ENCODE measurements at regions of chr11 and their contacts with region 1.

Region 1: DNA sequence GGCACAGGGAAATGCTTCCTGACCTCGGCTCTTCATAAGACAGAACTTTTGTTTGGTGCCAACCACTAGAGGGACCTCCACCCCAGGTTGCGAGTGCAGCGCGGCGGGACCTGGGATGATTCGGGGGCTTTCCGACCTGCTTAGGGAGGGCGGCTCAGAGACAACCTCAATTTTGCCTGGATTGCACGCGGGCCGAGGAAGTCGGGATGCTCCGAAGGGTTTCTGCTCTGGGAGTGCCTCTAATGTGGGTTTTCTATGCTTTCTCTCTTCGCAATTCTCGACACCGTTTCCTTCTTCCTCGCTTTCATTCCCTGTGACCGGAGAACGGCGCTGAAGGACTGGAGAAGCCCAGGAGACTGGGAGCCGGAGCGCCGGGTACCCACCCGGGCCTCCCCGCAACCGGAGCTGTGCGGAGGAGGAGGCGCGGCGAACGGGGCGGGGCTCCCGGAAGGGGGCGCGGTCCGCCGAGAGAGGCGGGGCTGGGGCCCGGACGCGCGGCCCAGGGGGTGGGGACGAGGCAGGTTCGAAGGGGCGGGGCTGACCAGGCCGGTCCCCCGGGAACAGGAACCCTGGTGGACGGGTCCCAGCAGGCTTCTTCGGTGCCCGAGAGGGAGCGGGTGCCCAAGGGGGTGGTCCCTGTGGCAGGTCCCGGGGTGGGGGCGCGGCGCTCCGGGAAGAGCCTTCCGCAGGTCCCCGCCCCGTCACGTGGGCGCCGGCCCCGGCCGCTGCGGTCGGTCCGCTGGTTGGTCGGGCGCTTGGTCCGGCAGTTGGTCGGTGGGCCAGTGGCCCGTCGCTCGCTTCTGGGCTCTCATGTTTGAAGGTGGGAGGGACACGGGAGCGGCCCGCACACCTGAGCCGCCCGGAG is at the start of gene PPFIBP2:
- DNase-seq: peak; percentile 82 to 87 (median 82)
- H3K4me3 ChIP-seq: peak within 1 kb of the TSS; percentile 88 to 93
- H3K4me3 Mint-ChIP-seq: peak within 1 kb of the TSS; percentile 94 to 97 (median 96)
- H3K27ac ChIP-seq: peak within 1 kb of the TSS; percentile 84
- H3K27ac Mint-ChIP-seq: peak within 1 kb of the TSS; percentile 92 to 98 (median 96)
- H3K4me1 ChIP-seq: peaks cover 20% of the 10 kb centered on the region
- H3K4me1 Mint-ChIP-seq: peaks cover 10 to 58% (median 30%) of the 10 kb centered on the region in 4 donors
- H3K27me3 ChIP-seq: no peaks in the 10 kb centered on the region
- H3K27me3 Mint-ChIP-seq: no peaks in the 10 kb centered on the region
- total RNA-seq, gene PPFIBP2: 18.5 to 22.0 TPM

Region 2: GRCh38 chr11:7538031-7538430 is 24.6 kb after region 1 on chr11:
- CTCF ChIA-PET with region 1: interaction called, 22 read pairs
- POLR2A ChIA-PET with region 1: no interaction called
- intact Hi-C with region 1: no loop called
- DNase-seq: peak in 2 of 5 donors; percentile 11 to 24
- H3K4me3 ChIP-seq: no peak overlapping the region
- H3K4me3 Mint-ChIP-seq: peak overlapping the region in 7 of 8 donors; percentile 31 to 74 (median 68)
- H3K27ac ChIP-seq: no peak overlapping the region
- H3K27ac Mint-ChIP-seq: peak overlapping the region in 6 of 7 donors; percentile 25 to 89 (median 78)
- H3K4me1 ChIP-seq: peaks cover 30% of the 10 kb centered on the region
- H3K4me1 Mint-ChIP-seq: peaks cover 19 to 84% (median 57%) of the 10 kb centered on the region in 4 donors
- H3K27me3 ChIP-seq: no peaks in the 10 kb centered on the region
- H3K27me3 Mint-ChIP-seq: peaks cover 0 to 5% of the 10 kb centered on the region in 2 donors

Region 3: DNA sequence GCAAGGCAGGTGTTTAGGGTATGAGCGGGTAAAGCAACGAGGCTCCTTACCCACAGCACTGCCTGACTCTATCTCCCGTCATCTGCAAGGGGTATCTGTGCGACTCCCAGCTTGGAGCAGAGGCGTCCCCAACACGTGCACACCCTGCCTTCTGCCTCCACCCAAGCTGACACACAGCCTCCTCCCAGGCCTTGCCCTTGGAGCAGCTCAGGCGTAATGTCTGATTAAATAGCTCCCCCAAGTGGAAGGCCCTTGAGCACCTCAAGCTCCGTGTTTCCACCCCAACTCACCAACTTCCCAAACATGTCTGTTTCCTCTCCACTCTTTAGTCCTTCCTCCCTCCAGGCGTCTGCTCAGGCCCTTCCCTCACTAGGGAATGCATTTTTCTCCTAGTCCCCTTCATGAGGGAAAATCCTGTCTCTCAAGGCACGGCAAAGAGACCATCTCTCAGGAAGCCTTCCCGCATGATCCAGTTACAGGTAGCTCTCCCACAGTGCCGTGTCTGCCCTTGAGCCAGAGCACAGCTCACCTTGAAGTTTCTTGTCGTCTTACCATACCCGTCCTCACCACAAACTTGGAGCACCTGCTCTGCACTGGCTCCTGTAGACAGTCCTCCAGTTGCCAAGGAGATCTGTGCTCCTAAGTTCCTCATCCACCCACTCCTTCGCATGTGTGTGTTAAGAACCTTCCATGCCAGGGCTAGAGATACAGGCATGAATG is 144.0 kb after region 1 on chr11:
- CTCF ChIA-PET with region 1: interaction called, 18 read pairs
- POLR2A ChIA-PET with region 1: no interaction called
- intact Hi-C with region 1: loop called (anchors 2 kb)
- DNase-seq: peak in 3 of 5 donors; percentile 13 to 24 (median 19)
- H3K4me3 ChIP-seq: no peak overlapping the region
- H3K4me3 Mint-ChIP-seq: no peak overlapping the region
- H3K27ac ChIP-seq: no peak overlapping the region
- H3K27ac Mint-ChIP-seq: peak overlapping the region in 2 of 7 donors; percentile 51 to 53
- H3K4me1 ChIP-seq: no peaks in the 10 kb centered on the region
- H3K4me1 Mint-ChIP-seq: peaks cover 0 to 2% (median 0%) of the 10 kb centered on the region in 4 donors
- H3K27me3 ChIP-seq: no peaks in the 10 kb centered on the region
- H3K27me3 Mint-ChIP-seq: no peaks in the 10 kb centered on the region

Region 4: GRCh38 chr11:7688238-7688826 is 174.9 kb after region 1 on chr11:
- CTCF ChIA-PET with region 1: interaction called, 9 read pairs
- POLR2A ChIA-PET with region 1: no interaction called
- intact Hi-C with region 1: loop called (anchors 1 kb)
- DNase-seq: peak in 2 of 5 donors; percentile 16 to 27
- H3K4me3 ChIP-seq: no peak overlapping the region
- H3K4me3 Mint-ChIP-seq: no peak overlapping the region
- H3K27ac ChIP-seq: no peak overlapping the region
- H3K27ac Mint-ChIP-seq: no peak overlapping the region
- H3K4me1 ChIP-seq: no peaks in the 10 kb centered on the region
- H3K4me1 Mint-ChIP-seq: no peaks in the 10 kb centered on the region
- H3K27me3 ChIP-seq: no peaks in the 10 kb centered on the region
- H3K27me3 Mint-ChIP-seq: peaks cover 17 to 25% of the 10 kb centered on the region in 2 donors